Psoas muscle (tissue), 8 donors: ENCODE measurements at regions of chr4 and their contacts with region 1.

Region 1: DNA sequence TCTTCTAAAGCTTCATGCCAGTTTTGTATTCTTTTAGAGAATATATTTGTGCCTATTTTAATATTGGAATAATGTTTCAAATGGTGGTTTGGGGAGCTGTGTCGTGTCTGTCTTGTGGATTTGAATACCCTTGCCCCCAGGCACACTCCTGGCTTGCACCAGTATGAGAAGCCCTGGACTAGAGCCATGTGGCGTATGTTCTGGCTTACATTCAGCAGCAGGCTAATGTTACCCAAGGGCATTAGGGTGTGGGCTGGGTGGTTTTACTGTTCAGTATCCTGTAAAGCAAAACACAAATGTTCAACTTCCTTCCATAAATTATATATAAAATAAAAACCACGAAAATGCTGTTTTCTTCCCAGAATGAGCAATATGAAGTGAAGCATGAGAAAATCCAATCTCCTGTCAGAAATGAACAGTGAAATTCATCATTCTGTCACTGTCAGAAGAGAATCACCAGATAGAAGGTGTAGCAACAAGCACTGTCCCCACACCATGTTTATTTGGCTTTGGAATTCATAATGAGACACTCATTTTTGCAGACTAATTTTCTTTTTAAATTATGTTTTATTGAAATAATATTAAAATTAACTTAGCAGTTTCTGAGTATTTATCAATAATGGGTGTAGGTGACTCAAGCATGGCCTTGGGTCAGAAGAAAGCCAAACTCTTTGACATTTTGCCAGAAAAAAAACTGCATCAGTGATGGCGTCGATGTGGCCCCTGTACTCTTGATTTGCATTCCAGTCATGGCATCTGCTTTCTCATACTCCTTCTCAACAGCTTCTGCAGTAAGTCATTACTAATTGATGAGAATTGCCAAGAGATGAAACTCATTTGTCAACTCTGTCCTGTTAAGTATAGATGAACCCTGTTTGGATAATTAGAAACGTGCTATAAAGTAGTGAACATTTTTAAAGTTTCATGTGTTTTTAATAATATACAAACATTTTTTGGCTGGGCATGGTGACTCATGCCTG is 43.8 kb downstream of the WWC2 start:
- DNase-seq: peak; percentile 36 to 67
- ATAC-seq: peak; percentile 80 to 92 (median 86)
- H3K4me3 ChIP-seq: no peak overlapping the region
- H3K27ac ChIP-seq: no peak overlapping the region
- H3K4me1 ChIP-seq: peaks cover 25% of the 10 kb centered on the region
- H3K27me3 ChIP-seq: no peaks in the 10 kb centered on the region
- CTCF ChIP-seq: no peak

Region 2: GRCh38 chr4:182758273-182758672 is 384.6 kb before region 1 on chr4:
- intact Hi-C with region 1: no loop called
- DNase-seq: no peak
- ATAC-seq: no peak
- H3K4me3 ChIP-seq: no peak overlapping the region
- H3K27ac ChIP-seq: no peak overlapping the region
- H3K4me1 ChIP-seq: no peaks in the 10 kb centered on the region
- H3K27me3 ChIP-seq: no peaks in the 10 kb centered on the region
- CTCF ChIP-seq: no peak

Region 3: GRCh38 chr4:183099537-183100297 is 43.1 kb before region 1 on chr4:
- intact Hi-C with region 1: loop called in 1 of 2 experiments (anchors 5 kb)
- DNase-seq: peak; percentile 30 to 71
- ATAC-seq: peak; percentile 2 to 11 (median 7)
- H3K4me3 ChIP-seq: peak overlapping the region; percentile 79
- H3K27ac ChIP-seq: peak overlapping the region; percentile 84
- H3K4me1 ChIP-seq: peaks cover 18% of the 10 kb centered on the region
- H3K27me3 ChIP-seq: no peaks in the 10 kb centered on the region
- CTCF ChIP-seq: no peak

Region 4: DNA sequence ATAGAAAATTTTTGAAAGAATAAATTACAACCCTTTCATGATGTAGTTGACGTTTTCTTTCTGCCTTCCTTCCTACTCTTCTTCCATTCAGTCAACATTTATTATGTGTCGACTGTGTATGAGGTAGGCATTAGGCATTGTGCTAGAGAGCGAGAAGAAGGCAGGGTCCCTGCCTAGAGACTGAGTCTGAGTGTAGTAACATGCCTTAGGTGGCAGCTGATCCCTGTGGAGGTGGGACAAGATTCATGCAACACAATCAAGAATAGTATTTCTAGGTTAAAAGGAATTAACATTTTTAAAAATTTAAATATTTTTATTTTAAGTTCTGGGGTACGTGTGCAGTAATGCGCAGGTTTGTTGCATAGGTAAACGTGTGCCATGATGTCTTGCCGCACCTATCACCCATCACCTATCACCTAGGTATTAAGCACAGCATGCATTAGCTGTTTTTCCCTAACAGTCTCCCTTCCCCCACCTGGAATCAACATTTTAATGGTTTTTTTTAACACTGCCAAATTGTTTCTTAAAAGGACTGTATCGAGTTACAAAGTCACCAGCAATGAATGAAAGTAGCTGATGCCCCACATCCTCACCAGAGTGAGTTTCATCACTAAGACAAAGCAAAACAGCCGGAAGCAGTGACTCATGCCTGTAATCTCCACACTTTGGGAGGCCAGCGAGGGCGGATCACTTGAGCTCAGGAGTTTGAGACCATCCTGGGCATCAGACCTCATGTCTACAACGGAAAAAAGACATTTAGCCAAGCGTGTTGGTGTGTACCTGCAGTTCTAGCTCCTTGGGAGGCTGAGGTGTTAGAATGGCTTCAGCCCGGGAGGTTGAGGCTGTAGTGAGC is 40.2 kb after region 1 on chr4:
- intact Hi-C with region 1: loop called in 1 of 2 experiments (anchors 5 kb)
- DNase-seq: peak in 1 of 2 donors; percentile 34
- ATAC-seq: peak; percentile 56 to 92 (median 71)
- H3K4me3 ChIP-seq: no peak overlapping the region
- H3K27ac ChIP-seq: no peak overlapping the region
- H3K4me1 ChIP-seq: peaks cover 9% of the 10 kb centered on the region
- H3K27me3 ChIP-seq: no peaks in the 10 kb centered on the region
- CTCF ChIP-seq: no peak